ENCODE measurements at regions of chr10 and their contacts with region 1.

Region 1: DNA sequence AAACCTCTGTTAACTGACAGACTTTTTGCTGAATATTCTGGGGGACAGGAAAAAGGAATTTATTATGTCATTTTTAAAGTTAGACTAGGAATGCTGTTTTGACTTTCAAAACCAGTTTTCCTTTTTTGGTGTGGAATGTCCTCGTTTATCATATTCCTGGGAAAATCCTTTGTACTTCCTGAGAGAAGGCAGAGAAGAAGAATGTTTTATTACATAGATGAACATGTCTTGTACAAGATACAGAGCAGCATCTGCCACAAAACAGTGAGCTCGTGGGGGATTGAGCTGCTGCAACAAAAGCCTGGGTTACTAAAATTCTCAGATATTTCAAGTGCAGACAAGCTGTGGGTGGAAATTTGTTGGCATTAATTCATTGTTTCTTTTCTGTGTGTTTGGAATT is 20.2 kb downstream of the MCU start:
- DNase-seq: no peak
- ATAC-seq: no peak
- H3K4me3 ChIP-seq: no peak overlapping the region
- H3K27ac ChIP-seq: peak overlapping the region; percentile 0
- H3K4me1 ChIP-seq: peaks cover 36% of the 10 kb centered on the region
- H3K27me3 ChIP-seq: no peaks in the 10 kb centered on the region
- CTCF ChIP-seq: no peak

Region 2: DNA sequence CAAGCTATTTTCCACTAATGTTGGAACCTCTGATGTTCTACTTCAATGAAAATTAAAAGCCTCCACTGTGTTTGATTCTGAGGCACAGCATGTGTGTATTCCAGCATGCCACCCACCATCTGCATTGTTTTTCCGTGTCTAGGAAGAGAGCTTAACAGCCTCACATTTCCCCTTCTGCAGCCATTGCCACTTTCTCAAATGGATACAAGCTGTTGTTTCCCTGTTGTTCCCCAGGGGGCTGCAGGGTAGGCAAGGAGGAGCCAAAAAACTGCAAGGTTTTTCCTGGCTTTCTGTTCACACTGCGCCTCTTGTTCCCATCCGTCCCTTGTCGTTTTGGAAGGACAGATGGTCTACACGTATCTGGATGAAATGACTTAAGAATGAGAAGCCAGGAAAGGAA is 285.1 kb before region 1 on chr10:
- intact Hi-C with region 1: no loop called
- DNase-seq: no peak
- ATAC-seq: no peak
- H3K4me3 ChIP-seq: no peak overlapping the region
- H3K27ac ChIP-seq: no peak overlapping the region
- H3K4me1 ChIP-seq: no peaks in the 10 kb centered on the region
- H3K27me3 ChIP-seq: no peaks in the 10 kb centered on the region
- CTCF ChIP-seq: no peak

Region 3: DNA sequence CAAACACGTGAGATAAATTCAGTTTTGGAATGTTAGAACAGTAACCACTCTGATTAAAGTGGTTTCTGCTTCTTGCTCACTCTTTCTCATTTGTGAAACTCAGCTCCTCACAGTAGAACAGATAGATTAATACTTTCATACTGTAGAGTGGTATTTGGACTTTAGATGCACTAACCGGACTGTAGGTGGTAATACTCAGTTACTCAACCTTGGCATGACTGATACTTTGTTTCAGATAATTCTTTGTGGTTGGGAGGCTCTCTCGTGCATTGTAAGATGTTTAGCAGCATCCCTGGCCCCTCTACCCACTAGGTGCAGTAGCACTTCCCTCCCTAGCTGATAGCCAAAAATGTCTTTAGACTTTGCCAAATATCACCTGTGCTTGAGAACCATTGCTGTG is 17.4 kb after region 1 on chr10:
- intact Hi-C with region 1: loop called in 1 of 2 experiments (anchors 2 kb)
- DNase-seq: no peak
- ATAC-seq: peak in 1 of 4 donors; percentile 31
- H3K4me3 ChIP-seq: no peak overlapping the region
- H3K27ac ChIP-seq: no peak overlapping the region
- H3K4me1 ChIP-seq: peaks cover 44% of the 10 kb centered on the region
- H3K27me3 ChIP-seq: no peaks in the 10 kb centered on the region
- CTCF ChIP-seq: no peak

Region 4: DNA sequence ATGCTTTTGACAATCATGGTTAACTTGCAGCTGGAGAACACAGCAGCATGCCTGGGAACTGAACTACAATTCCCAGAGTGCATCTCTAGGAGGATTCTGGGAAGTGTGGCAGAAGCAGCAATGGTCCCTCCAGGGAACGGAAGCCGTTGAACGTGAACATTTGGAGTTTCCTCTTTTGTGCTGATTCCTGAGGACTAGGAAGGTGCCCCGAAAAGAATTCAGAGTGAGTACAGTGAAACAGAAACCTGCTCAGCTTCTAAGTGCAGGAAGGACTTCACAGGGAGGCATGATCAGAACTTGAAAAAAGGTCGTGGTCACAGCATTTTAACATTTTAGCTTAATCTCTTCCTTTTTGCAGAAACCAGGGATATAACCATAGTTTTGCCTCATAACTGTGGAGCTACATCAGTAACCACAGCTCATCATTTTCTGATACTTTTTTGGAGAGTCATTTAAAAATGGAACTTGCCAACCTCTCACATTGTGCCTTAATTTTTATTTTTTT is 398.3 kb after region 1 on chr10 and contains the start of gene NUDT13:
- intact Hi-C with region 1: no loop called
- DNase-seq: peak; percentile 55 to 69
- ATAC-seq: peak; percentile 75 to 85 (median 85)
- H3K4me3 ChIP-seq: peak within 1 kb of the TSS; percentile 74
- H3K27ac ChIP-seq: peak within 1 kb of the TSS; percentile 95
- H3K4me1 ChIP-seq: peaks cover 26% of the 10 kb centered on the region
- H3K27me3 ChIP-seq: no peaks in the 10 kb centered on the region
- CTCF ChIP-seq: no peak
- total RNA-seq, gene NUDT13: 1.1 to 3.2 (median 2.3) TPM